ENCODE measurements at regions of chr12 and their contacts with region 1.

Region 1: DNA sequence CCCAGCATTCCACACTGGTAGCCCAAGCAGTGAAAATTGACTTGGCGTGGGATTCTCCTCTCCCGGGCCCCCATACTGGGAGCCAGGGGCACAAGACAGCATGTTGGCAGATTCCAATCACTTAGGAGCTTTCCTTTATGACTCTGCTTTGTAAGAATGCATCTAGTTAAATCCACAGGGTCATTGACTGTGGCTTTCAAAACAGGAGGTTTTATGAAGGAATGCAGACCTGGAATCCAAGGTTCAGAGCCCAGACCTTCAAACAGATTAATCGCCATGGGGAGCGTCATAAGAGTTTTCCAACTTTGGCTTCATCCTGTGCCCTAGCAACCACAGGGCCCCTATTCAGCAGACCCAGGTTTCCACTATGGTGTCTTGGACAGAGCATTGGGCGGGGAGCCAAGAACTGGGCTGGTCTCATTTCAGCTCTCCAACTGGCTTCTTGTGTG is 76.4 kb upstream of the RMST start:
- DNase-seq: no peak
- H3K4me3 ChIP-seq: no peak overlapping the region
- H3K27ac ChIP-seq: no peak overlapping the region
- H3K4me1 ChIP-seq: no peaks in the 10 kb centered on the region
- H3K27me3 ChIP-seq: no peaks in the 10 kb centered on the region
- CTCF ChIP-seq: no peak
- POLR2A ChIP-seq: no peak

Region 2: DNA sequence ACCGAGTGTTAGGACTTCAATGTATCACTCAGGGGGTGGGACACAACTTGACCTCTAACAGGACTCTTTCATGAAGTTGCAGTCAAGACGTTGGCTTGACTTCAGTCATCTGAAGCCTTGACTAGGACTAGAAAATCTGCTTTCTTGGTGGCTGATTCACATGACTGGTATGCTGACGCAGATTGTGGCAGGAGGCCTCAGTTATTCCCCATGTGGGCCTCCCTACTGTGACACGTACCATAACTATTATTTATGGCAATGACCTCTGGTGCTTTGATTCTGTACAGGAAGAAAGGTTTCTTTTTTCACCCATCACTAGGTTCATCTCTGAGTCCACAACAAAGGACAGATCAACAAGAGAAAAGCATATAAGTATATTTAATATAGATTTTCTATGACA is 208.7 kb before region 1 on chr12:
- CTCF ChIA-PET with region 1: no interaction called
- POLR2A ChIA-PET with region 1: no interaction called
- dilution Hi-C with region 1: no loop called
- intact Hi-C with region 1: no loop called
- DNase-seq: no peak
- H3K4me3 ChIP-seq: no peak overlapping the region
- H3K27ac ChIP-seq: no peak overlapping the region
- H3K4me1 ChIP-seq: no peaks in the 10 kb centered on the region
- H3K27me3 ChIP-seq: no peaks in the 10 kb centered on the region
- CTCF ChIP-seq: no peak
- POLR2A ChIP-seq: no peak

Region 3: GRCh38 chr12:97336900-97337751 is 49.0 kb before region 1 on chr12:
- CTCF ChIA-PET with region 1: no interaction called
- POLR2A ChIA-PET with region 1: no interaction called
- dilution Hi-C with region 1: no loop called
- intact Hi-C with region 1: no loop called
- DNase-seq: no peak
- H3K4me3 ChIP-seq: no peak overlapping the region
- H3K27ac ChIP-seq: no peak overlapping the region
- H3K4me1 ChIP-seq: no peaks in the 10 kb centered on the region
- H3K27me3 ChIP-seq: no peaks in the 10 kb centered on the region
- CTCF ChIP-seq: no peak
- POLR2A ChIP-seq: no peak

Region 4: DNA sequence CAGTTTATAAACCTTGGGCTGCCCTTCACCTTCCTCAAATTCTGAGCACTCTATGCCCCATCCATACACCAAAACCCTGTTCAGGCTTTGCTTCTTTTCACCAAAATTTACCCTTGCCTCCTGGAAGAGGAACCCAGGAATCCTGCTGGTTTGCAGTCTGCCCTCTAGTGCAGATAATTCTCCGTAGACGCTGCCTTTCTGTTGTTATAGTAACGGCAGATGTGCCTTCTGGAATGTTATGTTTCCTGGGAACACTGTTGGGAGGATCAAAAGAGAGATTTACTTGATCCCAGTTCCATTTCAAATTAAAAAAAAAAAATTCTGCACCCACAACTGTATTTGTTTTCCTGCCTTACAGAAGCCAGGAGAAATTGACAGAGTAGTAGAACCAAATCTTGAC is 27.8 kb before region 1 on chr12:
- CTCF ChIA-PET with region 1: no interaction called
- POLR2A ChIA-PET with region 1: no interaction called
- dilution Hi-C with region 1: no loop called
- intact Hi-C with region 1: loop called (anchors 1 kb)
- DNase-seq: no peak
- H3K4me3 ChIP-seq: no peak overlapping the region
- H3K27ac ChIP-seq: no peak overlapping the region
- H3K4me1 ChIP-seq: no peaks in the 10 kb centered on the region
- H3K27me3 ChIP-seq: no peaks in the 10 kb centered on the region
- CTCF ChIP-seq: no peak
- POLR2A ChIP-seq: no peak

Region 5: GRCh38 chr12:97520106-97520505 is 133.9 kb after region 1 on chr12:
- CTCF ChIA-PET with region 1: no interaction called
- POLR2A ChIA-PET with region 1: no interaction called
- dilution Hi-C with region 1: no loop called
- intact Hi-C with region 1: no loop called
- DNase-seq: no peak
- H3K4me3 ChIP-seq: no peak overlapping the region
- H3K27ac ChIP-seq: no peak overlapping the region
- H3K4me1 ChIP-seq: no peaks in the 10 kb centered on the region
- H3K27me3 ChIP-seq: no peaks in the 10 kb centered on the region
- CTCF ChIP-seq: no peak
- POLR2A ChIP-seq: no peak

Region 6: DNA sequence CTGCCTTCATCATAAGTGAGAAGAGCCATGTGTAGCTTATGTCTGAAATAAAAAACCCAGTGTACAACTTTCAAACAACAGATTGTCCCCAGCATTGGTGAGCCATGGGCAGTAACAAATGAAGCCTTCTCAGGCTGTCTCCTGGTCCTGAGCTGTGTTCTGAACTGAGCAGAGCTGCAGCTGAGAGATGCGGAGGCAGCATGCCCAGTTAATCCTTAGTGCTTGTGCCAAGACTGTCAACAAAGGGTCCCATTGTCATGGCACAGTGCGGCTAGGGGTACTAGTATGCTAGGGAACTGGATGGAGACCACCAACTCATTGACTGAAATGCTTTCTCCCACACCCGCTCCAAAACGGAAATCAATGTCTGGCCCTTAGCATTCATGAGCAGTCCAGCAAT is 230.8 kb after region 1 on chr12:
- CTCF ChIA-PET with region 1: no interaction called
- POLR2A ChIA-PET with region 1: no interaction called
- dilution Hi-C with region 1: no loop called
- intact Hi-C with region 1: no loop called
- DNase-seq: no peak
- H3K4me3 ChIP-seq: no peak overlapping the region
- H3K27ac ChIP-seq: no peak overlapping the region
- H3K4me1 ChIP-seq: no peaks in the 10 kb centered on the region
- H3K27me3 ChIP-seq: no peaks in the 10 kb centered on the region
- CTCF ChIP-seq: no peak
- POLR2A ChIP-seq: no peak